Psoas muscle (tissue), 8 donors: ENCODE measurements at regions of chr5 and their contacts with region 1.

Region 1: DNA sequence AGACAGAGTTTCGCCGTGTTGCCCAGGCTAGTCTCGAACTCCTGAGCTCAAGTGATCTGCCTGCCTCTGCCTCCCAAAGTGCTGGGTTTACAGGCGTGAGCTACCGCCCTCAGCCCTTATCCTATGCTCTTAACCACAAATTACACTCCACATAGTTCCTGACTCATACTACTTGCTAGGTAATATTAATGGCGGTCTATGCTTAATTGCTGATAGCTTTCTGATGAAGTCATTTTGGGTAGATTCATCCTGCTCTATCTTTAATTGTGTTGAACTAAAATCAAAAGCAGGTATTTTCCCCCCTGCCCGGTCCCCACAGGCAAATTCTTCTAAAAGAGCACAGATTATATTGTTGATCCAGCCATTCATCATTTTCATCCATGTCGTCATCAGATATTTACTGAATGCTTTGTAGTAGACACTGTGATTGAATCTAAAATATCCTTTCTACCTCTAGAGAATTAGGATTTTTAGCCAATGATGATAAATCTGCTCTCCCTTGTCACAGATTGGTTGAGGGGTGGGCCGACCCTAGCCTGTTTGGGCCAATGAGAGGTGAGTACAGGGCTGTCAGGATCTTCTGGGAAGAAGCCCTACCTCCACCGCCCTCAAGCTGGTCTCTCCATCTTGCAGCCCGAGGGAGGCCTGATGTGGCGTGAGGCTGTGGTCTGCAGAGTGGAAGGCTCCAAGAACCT is 144.8 kb downstream of the NR3C1 start:
- DNase-seq: no peak
- ATAC-seq: no peak
- H3K4me3 ChIP-seq: no peak overlapping the region
- H3K27ac ChIP-seq: no peak overlapping the region
- H3K4me1 ChIP-seq: no peaks in the 10 kb centered on the region
- H3K27me3 ChIP-seq: no peaks in the 10 kb centered on the region
- CTCF ChIP-seq: no peak

Region 2: DNA sequence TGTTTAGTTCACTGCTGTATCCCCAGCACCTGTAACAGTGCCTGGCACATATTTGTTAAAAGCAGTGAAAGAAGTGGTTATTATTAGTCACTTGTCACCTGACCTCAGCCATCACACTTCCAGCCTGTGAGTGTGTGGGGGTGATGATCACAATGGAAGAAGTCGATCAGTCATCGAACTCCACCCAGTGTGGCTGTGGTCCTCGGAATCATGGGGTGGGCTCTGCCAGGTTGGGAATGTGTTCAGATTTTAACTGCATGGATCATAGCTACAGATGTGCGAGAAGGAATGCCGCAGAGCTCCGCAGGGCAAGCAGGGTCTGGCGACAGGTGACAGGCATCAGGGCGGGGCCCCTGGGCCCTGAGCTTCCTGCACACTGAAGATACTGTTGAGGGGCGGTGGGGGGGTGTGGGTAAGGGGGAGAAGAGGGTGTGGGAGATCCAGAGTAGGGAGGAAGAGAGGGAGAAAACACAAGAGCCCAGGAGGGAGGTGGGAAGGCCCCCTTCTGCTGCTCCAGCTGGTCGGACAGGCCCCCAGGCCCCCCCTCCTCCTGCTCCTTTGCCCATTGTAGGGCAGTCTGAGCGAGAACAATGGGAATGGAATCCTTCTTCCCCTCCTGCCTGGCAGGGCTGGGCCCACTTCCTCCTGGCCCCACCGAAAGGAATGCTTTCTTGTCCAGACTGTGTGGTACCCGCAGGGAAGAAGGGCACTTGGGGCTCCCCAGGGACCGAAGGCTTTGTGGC is 1023.5 kb before region 1 on chr5:
- intact Hi-C with region 1: no loop called
- DNase-seq: no peak
- ATAC-seq: no peak
- H3K4me3 ChIP-seq: no peak overlapping the region
- H3K27ac ChIP-seq: no peak overlapping the region
- H3K4me1 ChIP-seq: no peaks in the 10 kb centered on the region
- H3K27me3 ChIP-seq: peaks cover 0 to 5% (median 2%) of the 10 kb centered on the region in 3 donors
- CTCF ChIP-seq: no peak

Region 3: GRCh38 chr5:143177263-143177983 is 81.3 kb before region 1 on chr5:
- intact Hi-C with region 1: no loop called
- DNase-seq: peak in 1 of 2 donors; percentile 77
- ATAC-seq: peak; percentile 85 to 88 (median 87)
- H3K4me3 ChIP-seq: no peak overlapping the region
- H3K27ac ChIP-seq: peak overlapping the region; percentile 85
- H3K4me1 ChIP-seq: peaks cover 33% of the 10 kb centered on the region
- H3K27me3 ChIP-seq: no peaks in the 10 kb centered on the region
- CTCF ChIP-seq: no peak

Region 4: DNA sequence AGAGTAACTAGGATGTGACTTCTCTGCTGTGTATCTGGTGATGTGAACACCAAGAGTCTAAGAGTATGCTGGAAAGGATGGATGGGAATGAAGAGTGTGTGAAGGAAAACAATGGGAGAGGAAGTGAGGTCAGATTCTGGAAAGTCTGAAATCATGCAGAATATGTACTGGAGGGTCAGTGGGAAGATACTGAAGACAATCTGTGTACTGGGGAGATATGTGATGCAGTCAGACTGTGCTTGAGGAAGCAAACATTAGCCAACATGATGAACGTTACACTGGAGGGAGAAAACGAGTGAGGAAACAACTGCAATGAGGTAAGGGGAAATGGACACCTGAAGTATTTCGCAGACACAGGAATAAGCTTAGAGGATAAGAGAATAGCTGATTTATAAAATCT is 39.0 kb after region 1 on chr5:
- intact Hi-C with region 1: loop called in 1 of 2 experiments (anchors 5 kb)
- DNase-seq: no peak
- ATAC-seq: no peak
- H3K4me3 ChIP-seq: no peak overlapping the region
- H3K27ac ChIP-seq: no peak overlapping the region
- H3K4me1 ChIP-seq: peaks cover 17% of the 10 kb centered on the region
- H3K27me3 ChIP-seq: no peaks in the 10 kb centered on the region
- CTCF ChIP-seq: no peak